ENCODE measurements at regions of chr1 and their contacts with region 1.

Region 1: GRCh38 chr1:14606632-14607031 is 8.1 kb downstream of the KAZN start:
- DNase-seq: no peak
- ATAC-seq: peak; percentile 38; the same call in 1 of the 3 replicates
- H3K4me3 ChIP-seq: no peak overlapping the region
- H3K27ac ChIP-seq: no peak overlapping the region
- H3K4me1 ChIP-seq: no peaks in the 10 kb centered on the region
- H3K27me3 ChIP-seq: no peaks in the 10 kb centered on the region
- CTCF ChIP-seq: peak; percentile 32 to 62 (median 48); a peak in 5 of 6 replicates
- EP300 ChIP-seq: no peak
- POLR2A ChIP-seq: no peak
- RAD21 ChIP-seq: peak; percentile 70

Region 2: GRCh38 chr1:14755518-14756252 is 149.1 kb after region 1 on chr1:
- CTCF ChIA-PET with region 1: no interaction called
- POLR2A ChIA-PET with region 1: no interaction called
- RAD21 ChIA-PET with region 1: no interaction called
- SMC1A ChIA-PET with region 1: no interaction called
- in situ Hi-C with region 1: no loop called
- intact Hi-C with region 1: no loop called
- DNase-seq: no peak
- ATAC-seq: peak; percentile 91
- H3K4me3 ChIP-seq: no peak overlapping the region
- H3K27ac ChIP-seq: no peak overlapping the region
- H3K4me1 ChIP-seq: peaks cover 7% of the 10 kb centered on the region
- H3K27me3 ChIP-seq: no peaks in the 10 kb centered on the region
- CTCF ChIP-seq: no peak
- EP300 ChIP-seq: no peak
- POLR2A ChIP-seq: no peak
- RAD21 ChIP-seq: no peak

Region 3: DNA sequence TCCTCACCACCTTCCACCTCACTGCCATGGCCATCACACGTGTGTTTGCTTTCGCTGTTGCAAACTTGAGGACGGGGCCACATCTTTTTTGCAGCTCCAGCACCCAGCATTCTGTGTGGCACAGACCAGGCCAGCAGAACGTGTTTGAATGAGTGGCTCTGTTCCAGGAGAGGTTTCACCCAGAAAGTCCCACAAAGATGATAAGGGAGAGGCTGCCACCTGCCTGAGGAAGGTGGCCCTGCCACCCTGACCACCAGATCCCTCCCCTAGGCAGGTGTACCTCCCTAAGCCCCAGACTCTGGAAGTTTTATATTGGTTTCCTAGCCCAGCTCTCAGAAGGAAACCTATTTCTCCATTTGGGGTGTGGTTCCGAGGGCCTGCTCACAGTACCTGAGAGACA is 243.9 kb after region 1 on chr1:
- CTCF ChIA-PET with region 1: interaction called, 4 read pairs
- POLR2A ChIA-PET with region 1: no interaction called
- RAD21 ChIA-PET with region 1: interaction called, 6 read pairs
- SMC1A ChIA-PET with region 1: no interaction called
- in situ Hi-C with region 1: no loop called
- intact Hi-C with region 1: loop called (anchors 1 kb)
- DNase-seq: no peak
- ATAC-seq: peak; percentile 69
- H3K4me3 ChIP-seq: no peak overlapping the region
- H3K27ac ChIP-seq: no peak overlapping the region
- H3K4me1 ChIP-seq: no peaks in the 10 kb centered on the region
- H3K27me3 ChIP-seq: peaks cover 0 to 3% of the 10 kb centered on the region in 2 experiments; a peak in 2 of 4 replicates
- CTCF ChIP-seq: peak; percentile 15 to 61 (median 30); a peak in 4 of 6 replicates
- EP300 ChIP-seq: no peak
- POLR2A ChIP-seq: no peak
- RAD21 ChIP-seq: peak; percentile 34; the same call in 1 of the 2 replicates